GM18951 (cell line): ENCODE measurements at regions of chr7 and their contacts with region 1.

Region 1: DNA sequence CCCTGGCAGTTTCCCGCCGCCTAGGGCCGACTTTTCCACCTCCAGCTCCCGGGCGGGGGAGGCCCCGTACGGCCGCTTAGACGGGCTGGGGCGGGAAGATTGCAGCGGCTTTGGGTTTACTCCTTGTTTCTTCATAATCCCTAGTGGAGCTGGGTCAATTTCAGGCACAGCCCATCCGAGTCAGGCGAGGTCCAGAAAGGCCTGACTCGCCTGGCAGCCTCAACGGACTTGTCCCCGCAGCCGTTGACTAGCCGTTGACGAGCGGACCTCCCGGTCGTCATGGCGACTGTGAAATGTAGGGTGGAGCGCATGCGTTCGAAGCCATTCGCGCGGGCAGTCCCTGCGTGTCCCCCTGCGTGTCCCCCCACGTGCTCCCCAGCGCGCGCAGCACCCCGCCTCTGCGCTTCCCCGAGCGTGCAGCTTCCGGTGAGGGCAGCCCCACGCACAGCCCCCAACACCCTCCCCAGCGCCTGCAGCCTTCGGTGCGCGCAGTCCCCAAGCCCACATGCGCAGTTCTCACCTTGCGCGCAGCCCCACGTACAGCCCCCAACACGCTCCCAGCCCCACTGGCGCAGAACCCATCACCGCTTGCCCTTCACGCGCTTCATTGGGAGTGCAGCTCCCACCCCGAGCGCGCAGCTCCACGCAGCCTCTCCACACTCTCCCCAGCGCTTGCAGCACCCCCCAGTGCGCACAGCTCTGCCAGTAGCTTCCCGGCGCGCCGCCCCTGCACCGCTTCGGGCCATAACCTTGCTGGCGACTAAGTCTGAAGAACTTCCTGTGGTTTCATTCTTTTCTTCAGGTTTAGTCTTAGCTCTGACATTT is 67.8 kb downstream of the TBX20 start:
- POLR2A ChIP-seq: no peak

Region 2: DNA sequence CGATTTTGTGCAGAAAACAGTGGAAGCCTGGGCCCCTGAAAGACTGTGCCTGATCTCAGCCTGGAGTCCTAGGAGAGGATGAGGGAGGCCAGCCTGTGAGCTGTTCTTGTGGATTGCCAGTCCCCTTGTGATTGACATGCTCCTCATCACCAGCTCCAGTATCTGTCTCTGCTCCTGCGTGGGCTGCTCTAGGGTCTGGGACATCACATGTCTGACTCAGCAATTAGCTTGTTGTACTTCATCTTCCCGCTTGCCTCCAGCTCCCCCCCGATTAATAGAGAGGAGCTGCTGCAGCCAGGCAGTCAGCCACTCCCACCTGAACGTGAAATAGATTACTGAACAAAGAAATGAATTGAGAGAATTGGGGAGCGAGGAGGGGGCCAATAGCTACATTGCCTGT is 167.4 kb after region 1 on chr7:
- in situ Hi-C with region 1: no loop called
- POLR2A ChIP-seq: no peak

Region 3: DNA sequence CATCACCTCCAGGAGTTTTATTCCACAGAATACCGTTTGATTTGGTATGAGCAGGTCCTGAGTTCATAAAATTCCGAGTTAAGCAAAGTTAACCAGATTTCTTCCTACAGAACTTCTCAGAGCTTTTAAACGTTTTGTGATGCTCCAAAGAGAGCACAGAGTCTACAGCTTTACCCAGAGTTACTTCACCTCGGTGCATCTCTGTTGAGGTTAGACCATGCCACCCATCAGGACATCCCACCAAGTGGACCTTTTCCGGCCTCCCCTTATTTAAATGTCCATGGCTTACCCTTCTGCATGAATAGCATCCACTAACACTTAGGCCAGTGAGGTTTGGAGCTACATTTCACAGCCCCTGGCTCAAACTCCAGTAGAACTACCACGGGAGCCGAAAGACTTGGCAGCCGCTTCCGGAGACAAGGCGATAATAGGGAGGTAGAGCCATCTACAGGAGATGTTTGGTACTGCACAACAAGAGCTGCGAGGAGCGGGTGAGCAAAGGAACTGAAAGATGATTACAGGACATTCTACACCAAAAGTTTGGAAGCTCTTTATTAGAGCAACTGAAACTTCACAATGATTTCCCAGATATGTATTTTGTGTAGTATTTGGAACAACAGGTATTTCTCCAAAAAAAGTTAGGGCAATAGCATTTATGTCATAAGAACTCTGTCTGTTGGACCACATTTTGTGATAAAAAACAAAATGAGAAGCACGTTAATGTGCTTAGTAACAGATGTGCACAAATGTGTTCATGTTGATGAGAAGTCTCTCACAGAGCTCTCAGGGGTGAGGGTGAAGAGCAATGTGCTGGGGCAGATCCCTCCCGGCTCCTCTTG is 334.1 kb after region 1 on chr7:
- in situ Hi-C with region 1: loop called (anchors 25 kb)
- POLR2A ChIP-seq: no peak